ENCODE measurements at regions of chr20 and their contacts with region 1.

Region 1: DNA sequence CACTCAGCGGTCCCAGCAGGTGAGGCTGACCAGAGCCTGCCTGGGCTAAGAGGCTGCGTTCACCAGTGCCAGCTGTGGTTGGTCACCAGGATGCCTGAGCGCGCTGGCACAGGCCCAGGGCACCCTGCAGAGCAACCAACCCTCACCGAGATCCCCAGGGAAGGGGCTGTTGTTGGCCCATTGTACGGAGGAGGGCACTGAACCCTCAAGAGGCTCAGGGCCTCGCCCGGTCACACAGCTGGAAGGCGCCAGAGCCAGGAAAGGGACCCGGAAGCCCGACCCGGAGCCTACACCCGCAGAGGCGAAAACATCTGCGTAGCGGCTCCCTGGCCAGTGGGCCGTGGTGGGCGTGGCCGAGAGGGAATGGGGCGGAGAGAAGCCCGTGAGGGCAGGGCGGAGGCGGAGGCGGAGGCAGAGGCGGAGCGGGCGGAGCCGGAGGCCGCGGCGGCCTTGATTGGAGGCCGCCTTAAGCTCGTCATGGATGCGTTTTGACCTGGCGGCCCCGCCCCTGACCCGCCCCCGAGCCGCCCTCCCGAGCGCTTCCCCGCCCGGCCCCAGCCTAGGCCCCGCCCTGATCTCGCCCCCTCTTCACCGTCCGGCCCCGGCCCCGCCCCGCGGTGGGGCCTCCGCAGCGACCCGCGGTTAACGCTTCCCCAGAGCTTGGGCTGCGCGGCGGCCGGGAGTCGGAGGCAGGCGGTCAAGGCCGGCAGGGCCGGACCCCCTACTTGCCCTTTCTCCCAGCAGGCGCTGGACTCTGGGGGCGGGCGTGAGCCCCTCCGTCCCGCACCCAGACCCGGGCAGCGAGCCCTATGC is 2.2 kb upstream of the MRGBP start:
- DNase-seq: peak; percentile 79 to 97
- H3K4me3 ChIP-seq: peak overlapping the region; percentile 89
- H3K27ac ChIP-seq: peak overlapping the region; percentile 90 to 94
- H3K4me1 ChIP-seq: peaks cover 4 to 15% of the 10 kb centered on the region in 2 donors
- H3K27me3 ChIP-seq: no peaks in the 10 kb centered on the region
- CTCF ChIP-seq: no peak

Region 2: DNA sequence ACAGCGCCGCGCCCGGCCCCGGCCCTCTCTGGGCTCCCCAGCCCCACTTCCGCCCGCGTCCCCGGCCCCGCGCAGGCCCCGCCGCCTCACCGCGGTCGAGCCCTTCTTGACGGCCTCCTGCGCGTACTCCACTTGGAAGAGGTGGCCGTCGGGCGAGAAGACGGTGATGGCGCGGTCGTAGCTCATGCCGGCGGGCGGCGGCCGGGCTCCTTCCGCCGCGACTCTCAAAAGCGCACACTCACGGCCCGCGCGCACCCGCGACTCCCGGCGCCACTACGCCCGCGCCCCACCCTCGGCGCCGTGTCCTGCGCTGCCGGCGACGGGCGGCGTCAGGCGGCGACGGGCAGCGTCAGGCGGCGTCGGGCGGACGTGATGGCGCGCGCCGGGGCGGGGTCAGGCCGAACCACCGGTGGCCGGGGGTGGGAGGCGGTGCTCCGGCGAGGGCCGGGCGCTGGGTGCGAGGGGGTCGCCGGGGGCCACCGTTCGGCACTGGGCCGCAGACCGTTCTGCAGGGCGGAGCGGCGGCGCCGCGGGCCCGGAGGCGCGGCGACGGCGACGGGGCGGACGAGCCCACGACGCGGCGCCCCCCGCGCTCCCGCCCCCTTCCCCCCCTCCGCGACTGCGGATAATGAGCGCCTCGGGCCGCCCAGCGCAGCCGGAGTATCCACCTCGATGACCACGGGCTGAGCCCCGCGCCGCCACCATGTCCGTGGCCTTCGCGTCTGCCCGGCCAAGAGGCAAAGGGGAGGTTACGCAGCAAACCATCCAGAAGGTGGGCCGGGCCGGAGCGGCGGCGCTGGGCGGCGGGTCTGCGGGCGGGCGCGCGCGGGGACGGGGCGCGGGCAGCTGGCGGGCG is 650.8 kb before region 1 on chr20 and contains the starts of genes PSMA7 and SS18L1:
- intact Hi-C with region 1: loop called (anchors 5 kb)
- DNase-seq: peak in 1 of 2 donors; percentile 91
- H3K4me3 ChIP-seq: peak within 1 kb of the TSS; percentile 91 to 99
- H3K27ac ChIP-seq: peak within 1 kb of the TSS; percentile 92 to 97
- H3K4me1 ChIP-seq: peaks cover 9 to 31% of the 10 kb centered on the region in 2 donors
- H3K27me3 ChIP-seq: no peaks in the 10 kb centered on the region
- CTCF ChIP-seq: peak in 1 of 3 experiments; percentile 6
- total RNA-seq, gene PSMA7: 301 TPM
- total RNA-seq, gene SS18L1: 39.8 TPM

Region 3: GRCh38 chr20:62386383-62387218 is 407.5 kb before region 1 on chr20 and contains the start of gene RPS21:
- intact Hi-C with region 1: loop called (anchors 5 kb)
- DNase-seq: peak; percentile 57 to 96
- H3K4me3 ChIP-seq: peak within 1 kb of the TSS; percentile 81 to 93
- H3K27ac ChIP-seq: peak within 1 kb of the TSS; percentile 93 to 94
- H3K4me1 ChIP-seq: peaks cover 15% of the 10 kb centered on the region in 2 donors
- H3K27me3 ChIP-seq: no peaks in the 10 kb centered on the region
- CTCF ChIP-seq: no peak
- total RNA-seq, gene RPS21: 1,828 TPM

Region 4: DNA sequence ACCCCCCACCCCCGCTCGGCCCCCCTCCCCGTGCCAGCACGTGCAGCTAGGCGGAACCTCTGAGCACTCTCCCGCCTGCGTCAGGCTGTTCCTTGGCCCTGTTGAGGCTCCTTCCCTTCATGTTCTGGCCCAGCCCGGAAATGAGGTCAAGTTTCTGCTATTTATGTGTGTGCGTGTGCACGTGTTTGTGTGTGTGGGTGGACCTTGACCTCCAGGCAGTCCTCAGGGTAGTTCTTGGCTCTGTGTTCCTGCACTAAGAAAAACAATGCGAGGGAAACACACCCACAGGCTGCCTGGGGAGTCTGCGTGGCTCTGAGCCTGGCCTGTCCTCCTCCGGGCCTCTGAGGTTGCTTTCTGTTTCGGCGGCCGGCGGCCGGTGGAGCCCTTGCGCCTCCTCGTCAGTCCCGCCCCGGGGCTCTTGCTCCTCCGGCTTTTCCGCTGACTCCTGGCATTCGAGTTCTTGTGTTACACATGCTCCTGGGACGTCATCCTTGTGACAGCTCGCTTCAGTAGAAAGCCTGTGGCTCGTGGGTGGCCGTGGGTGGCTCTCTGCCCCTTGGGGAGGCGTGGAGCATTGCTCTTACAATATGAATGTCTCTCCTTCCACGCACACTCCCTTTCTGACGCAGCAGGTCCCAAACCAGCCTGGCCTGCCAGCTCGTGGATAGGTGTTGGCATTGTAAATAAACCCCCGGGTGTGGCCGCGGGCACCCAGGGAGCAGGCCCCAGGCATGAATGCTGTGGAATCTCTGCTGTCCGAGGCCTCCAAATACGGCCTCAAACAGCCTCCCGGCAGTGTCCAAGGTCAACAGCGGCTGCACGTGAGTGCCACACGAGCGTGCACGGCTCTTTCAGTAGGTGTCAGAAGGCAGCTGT is 141.8 kb before region 1 on chr20:
- intact Hi-C with region 1: loop called (anchors 5 kb)
- DNase-seq: peak; percentile 88 to 96
- H3K4me3 ChIP-seq: peak overlapping the region; percentile 25 to 45
- H3K27ac ChIP-seq: peak overlapping the region; percentile 89 to 91
- H3K4me1 ChIP-seq: peaks cover 4 to 14% of the 10 kb centered on the region in 2 donors
- H3K27me3 ChIP-seq: no peaks in the 10 kb centered on the region
- CTCF ChIP-seq: no peak

Region 5: GRCh38 chr20:62723351-62723750 is 70.8 kb before region 1 on chr20:
- intact Hi-C with region 1: no loop called
- DNase-seq: no peak
- H3K4me3 ChIP-seq: no peak overlapping the region
- H3K27ac ChIP-seq: no peak overlapping the region
- H3K4me1 ChIP-seq: no peaks in the 10 kb centered on the region
- H3K27me3 ChIP-seq: no peaks in the 10 kb centered on the region
- CTCF ChIP-seq: no peak

Region 6: GRCh38 chr20:62824476-62825332 is 30.6 kb after region 1 on chr20:
- intact Hi-C with region 1: loop called (anchors 1 kb)
- DNase-seq: peak in 1 of 2 donors; percentile 84
- H3K4me3 ChIP-seq: peak overlapping the region; percentile 56 to 58
- H3K27ac ChIP-seq: peak overlapping the region; percentile 52 to 66
- H3K4me1 ChIP-seq: peaks cover 7 to 15% of the 10 kb centered on the region in 2 donors
- H3K27me3 ChIP-seq: no peaks in the 10 kb centered on the region
- CTCF ChIP-seq: no peak

Region 7: DNA sequence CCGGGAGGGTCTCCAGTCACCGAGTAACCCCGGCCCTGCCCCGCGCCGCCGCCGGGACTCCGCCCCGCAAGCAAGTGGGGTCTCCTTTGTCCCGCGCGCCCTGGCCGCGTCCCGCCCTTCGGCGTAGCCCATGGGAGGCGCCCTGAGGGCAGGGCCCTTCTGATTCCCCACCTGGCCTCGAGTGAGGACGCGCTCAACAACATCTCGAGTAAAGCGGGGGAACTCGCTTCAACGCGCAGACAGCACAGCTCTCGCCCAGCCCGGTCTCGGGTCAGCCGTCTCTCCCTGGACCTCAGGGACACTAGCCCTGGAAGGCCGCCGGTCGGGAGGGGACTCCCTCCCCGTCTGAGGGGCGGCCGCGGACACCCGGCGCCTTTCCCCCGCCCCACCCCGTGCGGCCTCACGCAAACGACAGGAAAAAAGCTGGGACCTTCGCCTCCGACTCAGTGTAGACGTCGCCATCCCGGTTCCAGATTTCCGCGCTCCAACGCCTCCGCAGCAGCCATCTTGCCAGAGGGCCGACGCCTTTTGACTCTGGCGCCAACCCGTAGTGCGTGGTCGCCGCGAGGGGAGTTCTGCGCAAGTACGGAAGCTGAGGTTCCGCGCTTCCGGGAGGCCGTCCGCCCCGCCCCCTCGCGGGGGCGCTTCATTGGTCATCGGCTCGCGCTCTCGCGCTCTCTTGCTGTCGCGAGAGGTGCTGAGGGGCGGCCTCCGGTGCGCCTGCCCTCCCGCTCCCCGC is 143.4 kb after region 1 on chr20:
- intact Hi-C with region 1: loop called (anchors 1 kb)
- DNase-seq: peak; percentile 85 to 98
- H3K4me3 ChIP-seq: peak overlapping the region; percentile 82 to 91
- H3K27ac ChIP-seq: peak overlapping the region; percentile 89 to 93
- H3K4me1 ChIP-seq: peaks cover 18 to 26% of the 10 kb centered on the region in 2 donors
- H3K27me3 ChIP-seq: no peaks in the 10 kb centered on the region
- CTCF ChIP-seq: no peak

Measured in ascending aorta (tissue), 2 donors.